Activated CD4-positive, alpha-beta memory T cell treated with anti-CD3 and anti-CD28 coated beads for 36 hours (primary cell): ENCODE measurements at regions of chr10 and their contacts with region 1.

Region 1: DNA sequence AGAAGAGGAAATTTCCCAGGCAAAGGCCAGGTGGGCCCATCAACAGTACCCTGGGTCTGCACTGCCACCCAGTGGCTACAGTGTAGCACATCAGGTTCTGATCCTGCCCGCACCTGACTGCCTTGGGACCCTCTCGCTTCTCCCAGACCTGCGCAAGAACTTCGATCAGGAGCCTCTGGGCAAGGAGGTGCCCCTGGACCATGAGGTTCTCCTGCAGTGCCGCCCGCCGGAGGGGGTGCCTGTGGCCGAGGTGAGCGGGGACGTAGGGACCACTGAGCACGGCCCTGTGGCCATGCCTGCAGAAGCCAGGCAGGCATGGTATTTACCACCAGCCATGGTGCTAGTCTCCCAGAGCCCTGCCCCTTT is 33.9 kb upstream of the SLC29A3 start:
- DNase-seq: peak; percentile 39
- H3K4me3 Mint-ChIP-seq: no peak overlapping the region
- H3K27ac Mint-ChIP-seq: no peak overlapping the region
- H3K4me1 Mint-ChIP-seq: no peaks in the 10 kb centered on the region
- H3K27me3 Mint-ChIP-seq: no peaks in the 10 kb centered on the region

Region 2: DNA sequence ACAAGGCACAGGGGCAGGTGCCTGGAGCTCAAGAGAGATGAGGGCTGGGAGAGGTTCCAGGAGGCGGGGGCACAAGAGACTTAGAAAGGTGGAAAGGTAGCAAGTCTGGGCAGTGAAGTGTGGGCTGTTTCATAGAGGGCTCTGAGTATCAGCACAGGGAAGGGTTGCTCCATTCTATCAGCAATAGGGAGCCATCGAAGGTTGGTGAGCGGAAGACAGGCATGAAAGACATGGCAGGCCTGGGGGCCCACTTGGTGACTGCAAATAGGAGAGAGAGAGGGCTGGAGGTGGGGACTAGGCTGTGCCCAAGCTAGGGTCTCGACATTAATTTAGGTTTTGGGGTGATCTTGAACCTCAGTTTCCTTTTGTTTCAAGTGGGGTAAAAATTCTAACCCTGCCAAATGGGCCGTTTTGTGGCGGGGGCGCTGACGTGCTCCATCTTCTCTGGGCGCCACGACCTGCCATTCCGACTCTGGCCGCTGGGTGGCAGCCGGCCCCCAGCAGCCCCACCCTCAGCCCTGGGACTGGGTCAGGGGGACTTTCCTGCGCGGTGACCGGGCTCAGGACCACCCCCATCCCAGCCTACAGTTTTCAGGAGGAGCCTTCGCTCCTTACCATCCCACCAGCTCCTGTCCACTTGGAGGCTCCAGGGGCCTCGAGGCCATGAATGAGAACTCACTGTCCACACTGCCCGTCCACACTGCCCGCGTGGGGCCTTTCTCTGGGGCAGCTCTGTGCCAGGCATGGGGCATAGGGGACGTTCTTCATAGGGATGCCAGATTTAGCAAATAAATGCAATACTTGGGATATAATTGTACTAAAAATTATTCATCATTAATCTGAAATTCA is 359.6 kb before region 1 on chr10:
- CTCF ChIA-PET with region 1: interaction called, 21 read pairs
- POLR2A ChIA-PET with region 1: no interaction called
- intact Hi-C with region 1: loop called (anchors 2 kb)
- DNase-seq: peak; percentile 65
- H3K4me3 Mint-ChIP-seq: no peak overlapping the region
- H3K27ac Mint-ChIP-seq: no peak overlapping the region
- H3K4me1 Mint-ChIP-seq: peaks cover 6% of the 10 kb centered on the region
- H3K27me3 Mint-ChIP-seq: peaks cover 5% of the 10 kb centered on the region

Region 3: DNA sequence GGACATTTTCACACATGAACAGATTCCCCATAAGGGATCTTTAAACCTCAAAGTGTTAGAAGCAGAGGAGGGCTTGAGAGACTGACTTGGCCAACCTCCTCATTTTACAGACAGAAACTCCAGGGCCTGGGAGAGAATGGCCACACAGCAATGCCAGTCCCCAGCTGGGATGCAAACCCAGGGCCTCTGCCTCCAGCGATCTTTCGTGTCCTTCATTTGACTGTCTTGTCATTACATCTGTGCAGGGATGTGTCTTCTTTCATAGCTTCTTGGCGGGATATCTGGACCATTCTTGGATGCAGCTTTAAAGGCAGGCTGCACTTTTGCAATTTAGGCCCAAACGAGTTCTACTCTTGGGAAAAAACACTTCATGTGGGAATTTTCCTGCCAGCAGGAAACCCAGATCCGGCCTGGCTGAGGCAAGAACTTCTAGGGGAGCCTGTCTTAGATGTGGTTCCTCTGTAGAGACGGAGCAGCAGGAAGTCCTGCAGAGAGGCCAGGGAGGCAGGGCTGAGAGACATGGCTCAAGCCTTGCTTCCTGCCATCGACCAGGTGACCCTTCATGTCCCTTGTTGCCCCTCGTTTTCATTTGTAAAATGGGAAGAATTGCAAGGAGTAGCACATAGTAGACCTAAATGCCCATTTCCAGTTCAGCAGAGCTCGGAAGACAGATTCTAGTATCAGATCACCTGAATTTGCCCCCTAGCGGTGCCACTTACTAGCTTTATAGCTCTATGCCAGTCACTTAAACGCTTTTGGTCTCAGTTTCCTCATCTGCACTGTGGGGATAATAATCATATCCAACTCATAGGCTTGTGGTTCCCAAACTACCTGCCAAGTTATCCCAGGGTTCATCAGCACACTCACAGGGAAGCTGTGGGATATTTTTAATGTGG is 10.0 kb before region 1 on chr10:
- CTCF ChIA-PET with region 1: interaction called, 19 read pairs
- POLR2A ChIA-PET with region 1: no interaction called
- intact Hi-C with region 1: no loop called
- DNase-seq: no peak
- H3K4me3 Mint-ChIP-seq: no peak overlapping the region
- H3K27ac Mint-ChIP-seq: no peak overlapping the region
- H3K4me1 Mint-ChIP-seq: no peaks in the 10 kb centered on the region
- H3K27me3 Mint-ChIP-seq: no peaks in the 10 kb centered on the region